Common myeloid progenitor, CD34-positive (primary cell): ENCODE measurements at regions of chr6 and their contacts with region 1.

Region 1: DNA sequence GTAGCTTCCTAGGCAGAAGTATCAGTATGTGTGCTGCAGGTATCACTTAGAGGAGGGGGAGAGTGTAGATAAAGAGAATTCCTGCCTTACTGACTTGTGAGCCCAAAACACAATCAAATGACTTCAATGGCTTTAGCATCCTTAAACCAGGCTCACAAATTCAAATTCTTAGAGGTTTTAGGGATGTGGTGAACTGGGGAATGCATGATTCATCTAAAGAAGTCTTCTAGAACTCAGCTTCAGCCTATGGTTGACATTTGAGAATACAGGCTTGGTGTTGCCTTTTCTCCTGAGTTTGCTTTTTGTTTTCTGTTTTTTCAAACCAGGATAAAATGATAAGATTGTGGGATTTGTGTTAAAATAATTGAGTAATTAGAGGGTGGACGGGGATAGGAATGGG is 14.4 kb downstream of the SNRPC start:
- DNase-seq: no peak
- H3K4me3 ChIP-seq: no peak overlapping the region
- H3K27ac ChIP-seq: no peak overlapping the region
- H3K4me1 ChIP-seq: no peaks in the 10 kb centered on the region
- H3K27me3 ChIP-seq: no peaks in the 10 kb centered on the region

Region 2: GRCh38 chr6:34526992-34527728 is 244.6 kb before region 1 on chr6:
- CTCF ChIA-PET with region 1: no interaction called
- POLR2A ChIA-PET with region 1: no interaction called
- DNase-seq: peak; percentile 92 to 95 (median 95)
- H3K4me3 ChIP-seq: peak overlapping the region in 3 of 7 experiments; percentile 40 to 67 (median 52)
- H3K27ac ChIP-seq: peak overlapping the region in 1 of 2 experiments; percentile 51
- H3K4me1 ChIP-seq: peaks cover 0 to 15% (median 8%) of the 10 kb centered on the region in 4 experiments
- H3K27me3 ChIP-seq: no peaks in the 10 kb centered on the region

Region 3: GRCh38 chr6:34745277-34746103 is 26.2 kb before region 1 on chr6:
- CTCF ChIA-PET with region 1: no interaction called
- POLR2A ChIA-PET with region 1: no interaction called
- DNase-seq: peak in 1 of 3 donors; percentile 21
- H3K4me3 ChIP-seq: no peak overlapping the region
- H3K27ac ChIP-seq: no peak overlapping the region
- H3K4me1 ChIP-seq: no peaks in the 10 kb centered on the region
- H3K27me3 ChIP-seq: no peaks in the 10 kb centered on the region

Region 4: GRCh38 chr6:34791701-34792235 is 20.0 kb after region 1 on chr6 and contains the start of gene BLTP3A:
- CTCF ChIA-PET with region 1: interaction called, 11 read pairs
- POLR2A ChIA-PET with region 1: interaction called, 4 read pairs
- DNase-seq: peak; percentile 85 to 95 (median 93)
- H3K4me3 ChIP-seq: peak within 1 kb of the TSS; percentile 70 to 98 (median 89)
- H3K27ac ChIP-seq: peak within 1 kb of the TSS; percentile 74 to 93
- H3K4me1 ChIP-seq: peaks cover 0 to 25% (median 19%) of the 10 kb centered on the region in 4 experiments
- H3K27me3 ChIP-seq: no peaks in the 10 kb centered on the region

Region 5: DNA sequence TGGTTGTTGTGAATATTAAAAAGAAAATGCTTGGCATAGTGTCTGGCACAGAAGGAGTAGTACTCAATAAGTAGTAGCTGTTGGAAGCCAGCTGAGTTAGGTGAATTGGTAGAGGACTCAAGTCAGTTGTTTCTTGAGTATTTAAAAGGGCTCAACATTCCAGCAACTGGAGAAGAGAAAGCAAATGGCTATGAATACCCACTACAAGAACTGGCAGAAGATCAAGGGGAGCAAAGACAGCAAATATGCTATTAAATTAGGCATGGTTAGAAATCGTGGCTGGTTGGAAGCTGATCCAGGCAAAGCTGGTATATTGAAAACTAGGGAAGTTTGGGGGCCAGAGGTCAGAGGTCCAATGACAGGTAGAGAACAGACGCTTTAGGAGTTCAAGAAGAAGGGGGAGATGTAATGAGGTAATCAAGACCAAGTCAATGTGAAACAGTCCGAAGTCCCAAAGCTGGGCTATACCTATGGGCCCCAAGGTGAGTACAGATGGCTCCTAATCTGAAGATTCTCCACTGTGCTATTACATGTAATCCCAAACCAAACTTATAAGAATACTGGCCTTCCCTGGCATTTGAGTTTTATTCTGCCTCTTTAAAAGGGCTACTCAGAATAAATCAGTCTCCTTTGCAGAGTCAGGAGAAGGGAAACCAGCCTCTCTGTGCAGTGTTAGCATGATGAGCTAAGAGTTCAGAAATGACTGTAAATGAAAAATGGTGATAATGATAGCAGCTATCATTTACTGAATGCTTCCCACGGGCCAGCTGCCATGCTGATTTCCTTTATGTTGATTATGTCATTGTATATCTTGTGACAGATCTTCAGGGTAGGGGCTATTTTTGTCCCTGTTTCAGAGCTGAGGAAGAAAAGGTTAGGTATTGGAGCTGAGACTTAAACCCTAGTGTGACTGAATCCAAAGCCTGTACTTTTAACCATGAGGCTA is 239.6 kb after region 1 on chr6:
- CTCF ChIA-PET with region 1: no interaction called
- POLR2A ChIA-PET with region 1: no interaction called
- DNase-seq: no peak
- H3K4me3 ChIP-seq: no peak overlapping the region
- H3K27ac ChIP-seq: no peak overlapping the region
- H3K4me1 ChIP-seq: peaks cover 0 to 7% (median 2%) of the 10 kb centered on the region in 4 experiments
- H3K27me3 ChIP-seq: no peaks in the 10 kb centered on the region